WTC11 (cell line): ENCODE measurements at regions of chr10 and their contacts with region 1.

Region 1: DNA sequence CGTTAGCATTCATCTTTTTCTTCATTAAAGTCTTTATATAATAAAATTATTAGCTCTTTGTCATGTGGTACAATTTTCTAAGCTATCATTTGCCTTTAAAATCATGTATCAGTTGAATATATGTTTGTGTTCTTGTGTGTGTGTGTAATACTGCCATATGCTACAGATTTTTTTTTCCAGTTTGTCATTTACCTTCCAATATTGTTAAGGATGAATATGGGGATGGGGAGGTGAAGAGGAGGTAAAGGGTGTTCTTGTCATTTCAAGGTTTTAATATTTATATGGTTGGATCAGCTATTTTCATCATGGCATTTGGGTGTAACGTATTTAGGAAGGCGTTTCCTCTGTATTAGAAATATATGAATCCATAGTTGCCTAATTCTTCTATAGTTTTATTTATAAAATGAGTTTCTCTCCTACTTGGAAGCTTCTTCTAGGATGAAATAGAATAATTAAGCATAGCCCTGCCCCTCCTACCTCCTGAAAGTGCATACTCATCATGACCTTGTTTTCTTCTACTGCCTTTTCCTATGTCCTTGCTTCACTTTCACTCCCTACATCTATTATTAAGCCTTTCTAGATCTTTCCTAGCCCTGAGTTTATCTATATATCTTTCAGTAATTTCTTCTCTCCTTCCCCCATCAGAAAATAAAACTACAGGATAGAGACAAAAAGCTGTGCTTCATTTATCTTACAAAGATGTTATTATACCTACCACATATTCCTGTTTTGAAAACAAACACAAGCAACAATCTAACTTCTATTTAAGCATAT is 25.1 kb downstream of the RAB18 start:
- DNase-seq: no peak
- ATAC-seq: no peak
- H3K4me3 Mint-ChIP-seq: no peak overlapping the region
- H3K27ac Mint-ChIP-seq: 0 out of 2 replicates have a peak overlapping the region, but pooled peaks have one; percentile 21
- H3K4me1 Mint-ChIP-seq: peaks cover 32% of the 10 kb centered on the region
- H3K27me3 Mint-ChIP-seq: no peaks in the 10 kb centered on the region
- CTCF ChIP-seq: no peak

Region 2: GRCh38 chr10:27542812-27543211 is 13.6 kb after region 1 on chr10:
- CTCF ChIA-PET with region 1: no interaction called
- POLR2A ChIA-PET with region 1: no interaction called
- DNase-seq: no peak
- ATAC-seq: no peak
- H3K4me3 Mint-ChIP-seq: no peak overlapping the region
- H3K27ac Mint-ChIP-seq: no peak overlapping the region
- H3K4me1 Mint-ChIP-seq: peaks cover 15% of the 10 kb centered on the region
- H3K27me3 Mint-ChIP-seq: no peaks in the 10 kb centered on the region
- CTCF ChIP-seq: no peak

Region 3: GRCh38 chr10:29266641-29267040 is 1737.4 kb after region 1 on chr10:
- CTCF ChIA-PET with region 1: no interaction called
- POLR2A ChIA-PET with region 1: interaction called, 10 read pairs
- DNase-seq: peak; percentile 38
- ATAC-seq: peak; percentile 77
- H3K4me3 Mint-ChIP-seq: no peak overlapping the region
- H3K27ac Mint-ChIP-seq: no peak overlapping the region
- H3K4me1 Mint-ChIP-seq: peaks cover 9% of the 10 kb centered on the region
- H3K27me3 Mint-ChIP-seq: peaks cover 4% of the 10 kb centered on the region
- CTCF ChIP-seq: no peak